Activated CD8-positive, alpha-beta T cell treated with anti-CD3 and anti-CD28 coated beads for 36 hours (primary cell): ENCODE measurements at regions of chr9 and their contacts with region 1.

Region 1: DNA sequence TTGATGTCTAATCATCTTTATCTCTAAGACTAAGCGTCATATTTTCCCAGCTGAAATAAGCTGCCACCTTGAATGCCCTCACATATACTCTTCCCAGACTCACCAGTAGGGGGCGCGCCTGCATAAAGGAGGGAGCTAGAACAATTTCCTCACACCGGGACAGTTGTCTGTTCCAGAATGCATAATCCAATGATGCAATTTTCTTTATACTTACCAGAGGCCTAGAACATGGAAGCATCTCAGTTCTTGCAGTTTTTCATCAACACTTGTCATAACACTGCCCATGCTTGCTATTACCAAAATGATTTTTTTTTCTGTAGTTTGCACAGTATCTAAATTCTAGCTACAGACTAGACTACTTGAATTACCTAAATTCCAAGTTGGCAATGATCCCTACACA is 203.9 kb downstream of the FRMD3 start:
- DNase-seq: peak; percentile 83
- ATAC-seq: peak; percentile 67
- H3K4me3 Mint-ChIP-seq: no peak overlapping the region
- H3K27ac Mint-ChIP-seq: no peak overlapping the region
- H3K4me1 Mint-ChIP-seq: no peaks in the 10 kb centered on the region
- H3K27me3 Mint-ChIP-seq: no peaks in the 10 kb centered on the region
- CTCF ChIP-seq: peak; percentile 88

Region 2: DNA sequence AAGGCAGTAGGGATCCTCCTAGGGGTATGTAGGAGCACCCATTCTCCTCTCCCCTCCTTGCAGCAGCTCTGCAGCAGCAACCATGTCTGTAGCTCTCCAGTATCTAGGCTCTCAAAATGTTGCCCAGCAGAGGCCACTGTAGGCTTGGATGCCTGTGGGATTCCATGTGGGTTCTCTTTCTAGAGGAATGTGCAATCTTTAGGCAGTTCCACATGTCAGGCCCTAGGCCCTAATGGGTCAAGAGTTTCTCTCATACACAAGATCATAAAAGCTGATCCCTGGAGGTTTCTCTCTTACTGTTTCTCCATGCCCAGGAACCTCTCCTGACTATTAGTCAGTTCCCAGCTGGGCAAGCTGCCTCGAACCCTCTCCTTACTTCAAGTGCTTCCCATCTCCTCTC is 11.9 kb before region 1 on chr9:
- CTCF ChIA-PET with region 1: interaction called, 14 read pairs
- POLR2A ChIA-PET with region 1: no interaction called
- intact Hi-C with region 1: no loop called
- DNase-seq: no peak
- ATAC-seq: no peak
- H3K4me3 Mint-ChIP-seq: no peak overlapping the region
- H3K27ac Mint-ChIP-seq: no peak overlapping the region
- H3K4me1 Mint-ChIP-seq: no peaks in the 10 kb centered on the region
- H3K27me3 Mint-ChIP-seq: no peaks in the 10 kb centered on the region
- CTCF ChIP-seq: no peak

Region 3: DNA sequence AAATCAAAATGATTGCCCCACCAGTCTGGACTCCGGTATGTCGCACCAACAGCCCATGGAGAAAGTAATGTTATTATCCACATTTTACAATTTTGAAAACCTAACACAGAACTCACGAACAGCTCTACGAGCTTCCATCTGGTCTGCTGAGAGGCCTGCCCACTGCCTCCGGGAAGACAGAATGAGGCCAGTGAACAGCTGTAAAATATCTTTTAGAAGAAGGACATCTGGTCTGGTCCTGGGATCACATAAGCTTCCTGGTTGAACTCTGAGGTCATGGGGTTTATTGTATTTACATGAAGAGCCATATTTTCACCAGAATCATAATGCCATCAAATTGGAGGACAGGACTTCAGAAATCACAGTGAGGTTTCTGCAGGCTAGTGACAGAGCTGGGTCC is 114.8 kb after region 1 on chr9:
- CTCF ChIA-PET with region 1: no interaction called
- POLR2A ChIA-PET with region 1: no interaction called
- intact Hi-C with region 1: no loop called
- DNase-seq: no peak
- ATAC-seq: no peak
- H3K4me3 Mint-ChIP-seq: no peak overlapping the region
- H3K27ac Mint-ChIP-seq: no peak overlapping the region
- H3K4me1 Mint-ChIP-seq: no peaks in the 10 kb centered on the region
- H3K27me3 Mint-ChIP-seq: no peaks in the 10 kb centered on the region
- CTCF ChIP-seq: no peak

Region 4: GRCh38 chr9:83538172-83538889 is 204.0 kb after region 1 on chr9 and contains the start of gene FRMD3:
- CTCF ChIA-PET with region 1: interaction called, 64 read pairs
- POLR2A ChIA-PET with region 1: no interaction called
- intact Hi-C with region 1: no loop called
- DNase-seq: peak; percentile 36
- ATAC-seq: peak; percentile 80
- H3K4me3 Mint-ChIP-seq: peak within 1 kb of the TSS; percentile 31
- H3K27ac Mint-ChIP-seq: no peak within 1 kb of the TSS
- H3K4me1 Mint-ChIP-seq: no peaks in the 10 kb centered on the region
- H3K27me3 Mint-ChIP-seq: peaks cover 25% of the 10 kb centered on the region
- CTCF ChIP-seq: peak; percentile 34
- total RNA-seq, gene FRMD3: 0.27 to 1.1 TPM

Region 5: DNA sequence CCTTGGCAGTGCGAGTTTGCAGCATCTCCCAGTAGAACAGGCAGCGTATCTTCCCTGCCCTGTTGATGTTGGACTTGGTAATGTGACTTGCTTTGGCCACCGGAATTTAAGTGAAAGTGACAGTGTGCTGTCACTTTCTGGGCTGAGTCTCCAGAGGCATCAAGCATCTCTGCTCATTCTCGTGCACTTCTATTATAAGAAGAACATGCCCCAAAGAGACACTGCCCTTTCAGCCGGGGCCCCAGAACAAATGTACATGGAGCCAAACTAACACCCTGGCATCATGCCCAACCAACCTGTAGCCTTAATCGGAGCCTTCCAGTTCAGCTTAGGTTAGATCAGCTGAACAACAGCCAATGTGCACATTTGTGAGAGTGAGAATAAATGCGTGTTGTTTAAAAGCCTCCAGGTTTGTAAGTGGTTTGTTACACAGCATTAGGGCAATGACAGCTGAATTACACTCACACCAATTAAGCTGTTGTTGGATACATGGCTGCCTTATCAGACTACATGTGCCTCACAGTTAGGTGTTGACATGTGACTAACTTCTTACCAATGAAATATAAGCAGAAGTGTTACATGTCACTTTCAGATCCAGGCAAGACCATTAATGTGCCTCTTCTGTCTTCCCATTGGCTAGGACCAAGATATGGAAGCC is 226.0 kb after region 1 on chr9:
- CTCF ChIA-PET with region 1: interaction called, 10 read pairs
- POLR2A ChIA-PET with region 1: no interaction called
- intact Hi-C with region 1: no loop called
- DNase-seq: no peak
- ATAC-seq: no peak
- H3K4me3 Mint-ChIP-seq: no peak overlapping the region
- H3K27ac Mint-ChIP-seq: no peak overlapping the region
- H3K4me1 Mint-ChIP-seq: no peaks in the 10 kb centered on the region
- H3K27me3 Mint-ChIP-seq: no peaks in the 10 kb centered on the region
- CTCF ChIP-seq: no peak

Region 6: GRCh38 chr9:83649080-83649479 is 314.8 kb after region 1 on chr9:
- CTCF ChIA-PET with region 1: interaction called, 10 read pairs
- POLR2A ChIA-PET with region 1: no interaction called
- intact Hi-C with region 1: no loop called
- DNase-seq: peak; percentile 80
- ATAC-seq: peak; percentile 88
- H3K4me3 Mint-ChIP-seq: no peak overlapping the region
- H3K27ac Mint-ChIP-seq: no peak overlapping the region
- H3K4me1 Mint-ChIP-seq: no peaks in the 10 kb centered on the region
- H3K27me3 Mint-ChIP-seq: no peaks in the 10 kb centered on the region
- CTCF ChIP-seq: peak; percentile 61